Endothelial cell of umbilical vein (primary cell): ENCODE measurements at regions of chr4 and their contacts with region 1.

Region 1: DNA sequence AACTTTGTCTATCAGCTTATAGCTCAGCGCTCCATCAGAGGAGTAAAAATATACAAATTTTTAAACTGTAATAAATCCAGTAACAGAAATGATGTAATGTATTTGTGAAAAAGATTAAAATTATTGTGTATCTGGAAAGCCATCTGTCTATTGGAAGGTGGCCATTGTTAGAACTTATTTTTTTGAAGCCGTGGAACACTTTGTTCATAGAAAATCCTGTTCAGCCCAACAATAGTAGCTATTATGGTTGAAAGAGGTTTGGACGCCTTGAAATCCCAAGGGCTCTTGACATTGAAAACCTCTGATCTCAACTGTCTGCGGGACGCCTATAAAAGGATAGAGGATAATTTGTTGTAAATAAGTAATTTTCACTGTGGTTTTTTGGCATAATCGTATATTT is 98.3 kb downstream of the RAPGEF2 start:
- DNase-seq: peak; percentile 60
- H3K4me3 ChIP-seq: no peak overlapping the region
- H3K27ac ChIP-seq: no peak overlapping the region
- H3K4me1 ChIP-seq: peaks cover 12% of the 10 kb centered on the region
- H3K27me3 ChIP-seq: no peaks in the 10 kb centered on the region
- CTCF ChIP-seq: no peak
- POLR2A ChIP-seq: no peak

Region 2: DNA sequence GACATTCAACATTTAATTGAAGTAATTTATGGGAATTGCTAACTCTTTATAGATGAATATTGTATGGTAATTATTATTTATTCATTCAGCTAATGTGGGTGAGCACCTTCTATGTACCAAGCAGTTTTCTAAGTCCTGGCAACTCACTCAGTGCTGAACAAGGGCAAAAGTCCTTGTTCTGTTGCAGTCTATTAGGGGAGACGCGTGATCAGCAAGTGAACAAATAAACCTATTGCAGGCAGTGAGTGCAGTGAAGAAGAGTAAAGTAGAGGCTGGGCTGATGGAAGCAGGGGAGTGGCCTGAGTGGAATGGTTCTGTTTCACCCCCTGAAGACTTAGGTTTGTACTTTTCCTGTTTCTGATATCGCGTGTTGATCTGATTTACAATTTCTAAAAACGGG is 116.0 kb after region 1 on chr4:
- CTCF ChIA-PET with region 1: interaction called, 5 read pairs
- POLR2A ChIA-PET with region 1: no interaction called
- dilution Hi-C with region 1: no loop called
- intact Hi-C with region 1: loop called (anchors 5 kb)
- DNase-seq: no peak
- H3K4me3 ChIP-seq: no peak overlapping the region
- H3K27ac ChIP-seq: no peak overlapping the region
- H3K4me1 ChIP-seq: no peaks in the 10 kb centered on the region
- H3K27me3 ChIP-seq: no peaks in the 10 kb centered on the region
- CTCF ChIP-seq: no peak
- POLR2A ChIP-seq: no peak

Region 3: DNA sequence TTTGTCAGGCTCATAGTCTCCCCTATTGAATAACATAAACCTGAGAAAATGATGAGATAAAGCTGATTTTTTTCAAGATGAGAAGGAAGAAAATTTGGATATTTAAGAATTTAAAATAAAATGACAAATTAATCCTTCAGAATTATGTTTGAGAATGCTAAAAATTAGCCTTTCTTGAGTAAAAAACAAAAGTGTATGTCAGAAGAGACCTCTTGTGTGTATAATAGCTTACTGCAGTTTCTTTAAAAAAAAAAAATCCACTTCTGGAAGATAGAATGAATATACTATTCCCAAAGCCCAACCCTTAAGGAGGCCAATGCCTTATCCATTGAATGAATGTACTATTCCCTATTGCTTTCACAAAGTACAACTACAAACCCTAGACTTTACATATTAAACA is 183.5 kb after region 1 on chr4:
- CTCF ChIA-PET with region 1: interaction called, 8 read pairs
- POLR2A ChIA-PET with region 1: no interaction called
- dilution Hi-C with region 1: no loop called
- intact Hi-C with region 1: loop called (anchors 5 kb)
- DNase-seq: no peak
- H3K4me3 ChIP-seq: no peak overlapping the region
- H3K27ac ChIP-seq: no peak overlapping the region
- H3K4me1 ChIP-seq: peaks cover 16% of the 10 kb centered on the region
- H3K27me3 ChIP-seq: no peaks in the 10 kb centered on the region
- CTCF ChIP-seq: no peak
- POLR2A ChIP-seq: no peak